ENCODE measurements at regions of chr15 and their contacts with region 1.

Region 1: DNA sequence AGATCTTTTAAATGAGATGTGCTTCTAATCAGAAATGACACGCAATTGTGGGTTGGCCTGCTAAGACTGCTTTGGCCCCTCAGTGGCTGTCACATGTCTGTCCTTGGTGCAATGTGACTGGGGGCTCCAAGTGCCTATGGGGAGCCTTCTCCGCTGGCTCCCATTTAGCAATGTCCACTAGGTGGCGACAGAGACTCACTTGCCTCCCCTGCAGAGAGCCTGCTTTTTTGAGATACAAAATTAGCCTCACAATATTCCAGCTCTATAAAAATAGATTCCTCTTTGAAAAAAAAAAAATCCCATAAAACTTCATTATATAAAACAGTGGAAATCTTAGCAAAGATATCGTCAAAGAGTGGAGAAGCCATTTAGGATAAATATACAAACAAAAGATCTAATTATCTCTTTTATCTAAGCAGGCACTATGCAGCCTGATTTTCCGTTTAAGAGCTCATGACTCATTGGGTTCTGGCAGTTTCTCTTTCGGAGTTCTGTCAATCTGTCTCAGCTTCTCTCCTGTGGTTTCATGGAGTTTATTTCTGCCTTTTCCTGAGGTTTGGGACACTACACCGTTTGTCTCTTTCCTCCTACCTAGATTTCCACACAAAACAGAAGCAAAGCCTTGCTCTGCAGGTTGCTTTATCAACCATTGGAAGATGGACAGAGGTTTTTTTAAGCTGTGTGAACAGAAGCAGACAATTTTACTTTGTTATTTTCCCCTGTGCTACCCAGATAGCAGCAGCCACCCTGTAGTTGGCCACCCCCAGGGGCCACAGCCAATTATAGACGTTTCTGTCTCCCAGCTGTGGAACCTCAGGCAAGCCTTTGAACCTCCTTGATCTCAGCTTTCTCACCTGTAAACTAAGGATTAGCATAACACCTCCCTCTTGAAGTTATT is 68.4 kb upstream of the TNFAIP8L3 start:
- DNase-seq: peak; percentile 72
- ATAC-seq: peak; percentile 96
- H3K4me3 ChIP-seq: peak overlapping the region; percentile 46
- H3K27ac ChIP-seq: no peak overlapping the region
- H3K4me1 ChIP-seq: no peaks in the 10 kb centered on the region
- H3K27me3 ChIP-seq: peaks cover 29% of the 10 kb centered on the region
- CTCF ChIP-seq: peak; percentile 96
- POLR2A ChIP-seq: no peak
- RAD21 ChIP-seq: peak; percentile 94

Region 2: GRCh38 chr15:50968353-50968752 is 194.8 kb before region 1 on chr15:
- CTCF ChIA-PET with region 1: no interaction called
- POLR2A ChIA-PET with region 1: no interaction called
- dilution Hi-C with region 1: no loop called
- in situ Hi-C with region 1: no loop called
- intact Hi-C with region 1: no loop called
- DNase-seq: peak; percentile 26
- ATAC-seq: no peak
- H3K4me3 ChIP-seq: no peak overlapping the region
- H3K27ac ChIP-seq: no peak overlapping the region
- H3K4me1 ChIP-seq: no peaks in the 10 kb centered on the region
- H3K27me3 ChIP-seq: no peaks in the 10 kb centered on the region
- CTCF ChIP-seq: no peak
- POLR2A ChIP-seq: no peak
- RAD21 ChIP-seq: no peak

Region 3: GRCh38 chr15:51046799-51047482 is 116.2 kb before region 1 on chr15:
- CTCF ChIA-PET with region 1: no interaction called
- POLR2A ChIA-PET with region 1: no interaction called
- dilution Hi-C with region 1: no loop called
- in situ Hi-C with region 1: no loop called
- intact Hi-C with region 1: no loop called
- DNase-seq: peak; percentile 39
- ATAC-seq: peak; percentile 60
- H3K4me3 ChIP-seq: no peak overlapping the region
- H3K27ac ChIP-seq: no peak overlapping the region
- H3K4me1 ChIP-seq: peaks cover 6% of the 10 kb centered on the region; the same call in 1 of the 2 replicates
- H3K27me3 ChIP-seq: peaks cover 5% of the 10 kb centered on the region; the same call in 1 of the 2 replicates
- CTCF ChIP-seq: no peak
- POLR2A ChIP-seq: no peak
- RAD21 ChIP-seq: no peak

Region 4: GRCh38 chr15:51192521-51193280 is 29.6 kb after region 1 on chr15:
- CTCF ChIA-PET with region 1: interaction called, 46 read pairs
- POLR2A ChIA-PET with region 1: interaction called, 3 read pairs
- dilution Hi-C with region 1: no loop called
- in situ Hi-C with region 1: no loop called
- intact Hi-C with region 1: loop called (anchors 1 kb)
- DNase-seq: peak; percentile 80
- ATAC-seq: peak; percentile 100
- H3K4me3 ChIP-seq: no peak overlapping the region
- H3K27ac ChIP-seq: no peak overlapping the region
- H3K4me1 ChIP-seq: no peaks in the 10 kb centered on the region
- H3K27me3 ChIP-seq: peaks cover 33% of the 10 kb centered on the region
- CTCF ChIP-seq: peak; percentile 90
- POLR2A ChIP-seq: no peak
- RAD21 ChIP-seq: peak; percentile 81

Region 5: GRCh38 chr15:51281368-51281967 is 118.4 kb after region 1 on chr15:
- CTCF ChIA-PET with region 1: interaction called, 5 read pairs
- POLR2A ChIA-PET with region 1: no interaction called
- dilution Hi-C with region 1: no loop called
- in situ Hi-C with region 1: no loop called
- intact Hi-C with region 1: loop called (anchors 2 kb)
- DNase-seq: peak; percentile 53
- ATAC-seq: peak; percentile 99
- H3K4me3 ChIP-seq: no peak overlapping the region
- H3K27ac ChIP-seq: no peak overlapping the region
- H3K4me1 ChIP-seq: no peaks in the 10 kb centered on the region; the same call in 1 of the 2 replicates
- H3K27me3 ChIP-seq: peaks cover 50% of the 10 kb centered on the region
- CTCF ChIP-seq: peak; percentile 82
- POLR2A ChIP-seq: no peak
- RAD21 ChIP-seq: peak; percentile 87

Region 6: GRCh38 chr15:51401872-51402517 is 238.9 kb after region 1 on chr15:
- CTCF ChIA-PET with region 1: interaction called, 4 read pairs
- POLR2A ChIA-PET with region 1: no interaction called
- dilution Hi-C with region 1: no loop called
- in situ Hi-C with region 1: no loop called
- intact Hi-C with region 1: loop called (anchors 1 kb)
- DNase-seq: peak; percentile 26
- ATAC-seq: peak; percentile 76
- H3K4me3 ChIP-seq: no peak overlapping the region
- H3K27ac ChIP-seq: no peak overlapping the region
- H3K4me1 ChIP-seq: no peaks in the 10 kb centered on the region
- H3K27me3 ChIP-seq: peaks cover 48% of the 10 kb centered on the region
- CTCF ChIP-seq: peak; percentile 63
- POLR2A ChIP-seq: no peak
- RAD21 ChIP-seq: peak; percentile 57

Region 7: DNA sequence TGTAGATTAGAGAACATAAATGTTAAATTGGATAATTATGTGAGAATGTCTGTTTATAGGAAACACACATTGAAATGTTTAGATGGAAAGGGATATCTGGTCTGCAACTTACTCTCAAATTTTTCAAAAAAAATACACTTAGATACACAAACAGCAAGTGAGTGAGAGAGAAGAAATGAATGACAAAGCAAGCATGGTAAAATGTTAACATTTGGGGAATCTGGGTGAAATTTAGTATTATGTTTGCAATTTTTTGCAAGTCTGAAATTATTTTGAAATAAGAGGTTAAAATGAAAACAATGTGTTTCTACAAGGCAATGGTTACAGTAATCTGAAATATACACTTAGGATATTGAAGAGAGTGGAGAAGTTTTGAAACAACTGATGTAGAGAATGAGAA is 312.6 kb after region 1 on chr15:
- CTCF ChIA-PET with region 1: no interaction called
- POLR2A ChIA-PET with region 1: no interaction called
- dilution Hi-C with region 1: no loop called
- in situ Hi-C with region 1: no loop called
- intact Hi-C with region 1: no loop called
- DNase-seq: no peak
- ATAC-seq: peak; percentile 46; the same call in 1 of the 2 replicates
- H3K4me3 ChIP-seq: no peak overlapping the region
- H3K27ac ChIP-seq: no peak overlapping the region; the same call in 1 of the 2 replicates
- H3K4me1 ChIP-seq: no peaks in the 10 kb centered on the region
- H3K27me3 ChIP-seq: no peaks in the 10 kb centered on the region
- CTCF ChIP-seq: no peak
- POLR2A ChIP-seq: no peak
- RAD21 ChIP-seq: no peak